ENCODE measurements at regions of chr5 and their contacts with region 1.

Region 1: GRCh38 chr5:32174011-32174870 is at the start of gene GOLPH3:
- DNase-seq: peak; percentile 96
- H3K4me3 Mint-ChIP-seq: peak within 1 kb of the TSS; percentile 99
- H3K27ac Mint-ChIP-seq: peak within 1 kb of the TSS; percentile 95
- H3K4me1 Mint-ChIP-seq: peaks cover 32% of the 10 kb centered on the region
- H3K27me3 Mint-ChIP-seq: no peaks in the 10 kb centered on the region
- total RNA-seq, gene GOLPH3: 38.2 to 41.5 TPM

Region 2: GRCh38 chr5:31021181-31021624 is 1153.0 kb before region 1 on chr5:
- CTCF ChIA-PET with region 1: no interaction called
- intact Hi-C with region 1: no loop called
- DNase-seq: no peak
- H3K4me3 Mint-ChIP-seq: no peak overlapping the region
- H3K27ac Mint-ChIP-seq: no peak overlapping the region
- H3K4me1 Mint-ChIP-seq: no peaks in the 10 kb centered on the region
- H3K27me3 Mint-ChIP-seq: no peaks in the 10 kb centered on the region

Region 3: DNA sequence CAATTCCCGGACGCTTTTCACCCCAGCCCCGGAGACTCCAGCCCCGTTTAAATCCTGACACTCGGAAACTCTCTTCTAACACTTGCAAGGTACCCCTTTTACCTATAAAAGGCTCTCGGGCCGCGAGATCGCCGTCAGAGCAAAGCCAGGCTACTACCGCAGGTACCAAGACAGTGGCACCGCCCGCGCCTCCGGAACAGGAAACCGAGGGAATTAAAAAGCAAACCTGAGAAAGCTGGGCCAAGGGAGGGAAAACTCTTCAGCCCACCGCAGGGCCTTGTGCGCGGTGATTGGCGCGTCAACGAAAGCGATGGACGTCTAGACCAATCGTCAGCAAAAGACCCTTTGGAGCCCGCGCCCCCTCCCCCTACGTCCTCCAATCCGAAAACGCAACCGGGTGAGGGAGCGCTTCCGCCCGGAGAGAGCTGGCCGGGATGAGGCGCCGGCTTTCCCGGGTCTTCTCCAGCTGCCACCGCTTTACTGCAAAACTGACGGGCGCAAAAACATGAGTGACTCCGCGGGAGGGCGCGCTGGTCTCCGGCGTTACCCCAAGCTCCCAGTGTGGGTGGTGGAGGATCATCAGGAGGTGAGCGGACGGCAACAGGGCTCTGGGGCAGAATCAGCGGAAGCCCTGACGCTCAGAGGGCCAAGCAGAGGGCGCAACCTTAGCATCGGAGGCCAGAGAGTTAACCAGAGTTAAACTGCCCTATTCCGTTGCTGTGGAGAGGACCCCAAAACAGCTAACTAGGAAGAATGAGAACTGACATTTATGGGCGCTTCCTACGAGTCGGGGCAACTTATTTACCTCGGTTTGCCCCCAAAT is 642.1 kb before region 1 on chr5 and contains the starts of genes C5orf22 and DROSHA:
- CTCF ChIA-PET with region 1: no interaction called
- intact Hi-C with region 1: loop called (anchors 5 kb)
- DNase-seq: peak; percentile 95
- H3K4me3 Mint-ChIP-seq: peak within 1 kb of the TSS; percentile 87
- H3K27ac Mint-ChIP-seq: peak within 1 kb of the TSS; percentile 80
- H3K4me1 Mint-ChIP-seq: peaks cover 41% of the 10 kb centered on the region
- H3K27me3 Mint-ChIP-seq: no peaks in the 10 kb centered on the region
- total RNA-seq, gene C5orf22: 23.7 to 25.5 TPM
- total RNA-seq, gene DROSHA: 60.7 to 60.9 TPM

Region 4: DNA sequence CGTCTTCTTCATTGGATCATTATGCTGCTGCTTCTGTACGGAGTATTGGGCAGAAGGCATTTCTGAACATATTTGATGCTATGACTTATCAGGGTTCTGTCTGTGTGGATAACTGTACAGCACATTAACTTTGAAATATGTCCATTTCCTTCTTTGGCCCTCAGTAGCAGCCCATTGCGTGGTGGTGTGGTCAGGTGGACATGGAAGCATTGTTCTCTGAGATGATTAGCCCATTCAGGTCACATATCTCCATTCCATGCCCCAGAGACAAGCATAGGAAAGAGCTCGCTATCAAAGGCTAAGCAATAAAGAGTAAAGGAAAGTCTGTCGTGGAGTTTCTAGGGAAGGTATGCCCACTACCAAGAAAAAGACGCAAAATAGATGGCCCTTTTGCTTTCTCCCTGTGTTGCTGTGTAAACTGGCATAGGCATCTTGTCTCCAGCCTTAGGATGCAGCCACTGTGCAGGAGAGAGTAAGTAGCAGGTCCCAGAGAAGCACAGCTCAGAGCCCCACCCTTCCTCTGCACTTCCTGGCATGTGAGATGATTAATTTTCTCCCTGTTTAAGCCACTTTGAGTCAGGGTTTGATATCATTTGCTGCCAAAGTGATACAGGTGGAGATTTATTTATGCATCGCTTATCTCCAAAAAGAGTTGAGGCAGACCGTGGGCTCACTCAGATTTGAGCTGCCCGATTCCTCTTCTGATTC is 313.4 kb before region 1 on chr5:
- CTCF ChIA-PET with region 1: no interaction called
- intact Hi-C with region 1: loop called (anchors 2 kb)
- DNase-seq: peak; percentile 55
- H3K4me3 Mint-ChIP-seq: no peak overlapping the region
- H3K27ac Mint-ChIP-seq: peak overlapping the region; percentile 59
- H3K4me1 Mint-ChIP-seq: peaks cover 29% of the 10 kb centered on the region
- H3K27me3 Mint-ChIP-seq: peaks cover 3% of the 10 kb centered on the region

Region 5: DNA sequence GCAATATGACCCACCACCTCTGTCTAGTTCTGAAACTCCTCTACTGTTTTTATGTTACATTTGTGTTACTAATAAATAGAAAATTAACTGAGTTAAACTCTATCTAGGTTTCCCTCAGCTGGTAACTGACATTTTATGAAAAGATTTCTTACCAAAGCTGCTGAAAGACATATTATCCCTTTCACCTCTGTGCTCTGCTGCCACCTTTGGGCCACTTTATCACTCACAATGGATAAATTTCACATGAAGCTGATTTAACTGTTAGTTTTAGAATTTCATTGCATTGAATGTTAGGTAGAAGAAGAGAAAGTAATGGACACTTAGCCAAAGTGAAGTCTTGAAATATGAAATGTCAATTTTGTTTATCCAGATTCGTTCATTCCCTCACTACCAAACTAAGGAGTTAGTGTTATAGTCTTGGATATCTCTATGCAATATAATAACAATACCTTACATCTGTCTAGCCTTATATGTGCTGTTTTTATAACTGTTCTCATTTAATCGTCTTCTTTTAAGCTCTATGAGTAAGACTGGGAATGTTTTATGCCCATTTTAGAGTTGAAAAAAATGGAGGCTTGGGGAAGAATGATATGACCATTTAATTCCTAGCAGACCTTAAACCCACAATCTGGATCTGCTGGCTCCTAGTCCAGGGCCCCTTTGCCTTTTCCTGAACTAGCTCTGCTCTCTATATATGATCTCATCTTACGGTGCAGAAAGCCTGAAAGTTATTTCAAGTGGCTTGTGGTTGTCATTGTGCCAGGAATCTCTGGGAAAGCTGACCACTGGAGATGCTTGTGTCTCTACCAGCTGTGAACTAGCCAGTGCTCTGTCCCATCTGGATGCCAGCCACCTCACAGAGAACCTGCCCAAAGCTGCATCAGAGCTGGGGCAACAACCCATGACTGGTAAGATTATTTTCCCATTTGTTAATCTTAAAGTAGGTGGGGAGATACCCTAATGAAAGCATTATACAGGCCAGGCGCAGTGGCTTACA is 97.2 kb before region 1 on chr5:
- CTCF ChIA-PET with region 1: no interaction called
- intact Hi-C with region 1: no loop called
- DNase-seq: peak; percentile 71
- H3K4me3 Mint-ChIP-seq: no peak overlapping the region
- H3K27ac Mint-ChIP-seq: no peak overlapping the region
- H3K4me1 Mint-ChIP-seq: no peaks in the 10 kb centered on the region
- H3K27me3 Mint-ChIP-seq: no peaks in the 10 kb centered on the region

Region 6: GRCh38 chr5:32202394-32202793 is 28.2 kb after region 1 on chr5:
- CTCF ChIA-PET with region 1: interaction called, 4 read pairs
- intact Hi-C with region 1: loop called (anchors 2 kb)
- DNase-seq: no peak
- H3K4me3 Mint-ChIP-seq: no peak overlapping the region
- H3K27ac Mint-ChIP-seq: no peak overlapping the region
- H3K4me1 Mint-ChIP-seq: peaks cover 33% of the 10 kb centered on the region
- H3K27me3 Mint-ChIP-seq: peaks cover 3% of the 10 kb centered on the region

Region 7: DNA sequence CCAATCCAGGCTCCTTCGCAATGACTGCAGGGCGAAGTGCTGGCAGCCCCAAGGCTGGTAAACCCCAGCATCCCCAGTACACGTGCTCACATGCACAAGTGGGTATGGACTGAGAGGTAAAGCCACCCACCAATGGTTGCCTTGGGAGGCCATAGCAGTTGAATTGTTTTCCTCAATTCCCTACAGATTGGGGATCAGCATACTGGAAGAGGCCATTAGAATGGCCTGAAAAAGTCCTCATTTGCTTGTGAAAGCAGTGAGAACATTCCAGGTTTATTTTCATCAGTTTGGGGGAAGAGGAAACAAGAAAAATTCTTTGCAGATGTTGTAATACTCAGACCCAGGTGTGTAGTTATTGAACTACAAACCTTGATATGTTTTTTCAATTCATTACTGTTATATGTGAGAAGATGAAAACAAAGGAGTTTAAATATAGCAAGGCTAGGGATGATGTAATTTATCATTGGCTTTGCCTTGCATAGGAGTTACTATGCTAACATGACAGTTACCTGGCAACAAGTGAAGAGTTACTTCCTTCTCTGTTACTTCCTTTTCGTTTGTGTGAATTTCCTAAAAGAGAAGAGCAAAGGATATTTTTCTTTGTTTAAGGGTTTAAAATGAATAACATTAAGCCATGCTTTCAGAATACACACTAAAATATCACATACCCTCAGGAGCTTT is 102.1 kb after region 1 on chr5:
- CTCF ChIA-PET with region 1: no interaction called
- intact Hi-C with region 1: loop called (anchors 1 kb)
- DNase-seq: no peak
- H3K4me3 Mint-ChIP-seq: no peak overlapping the region
- H3K27ac Mint-ChIP-seq: peak overlapping the region; percentile 77
- H3K4me1 Mint-ChIP-seq: peaks cover 52% of the 10 kb centered on the region
- H3K27me3 Mint-ChIP-seq: no peaks in the 10 kb centered on the region

Region 8: GRCh38 chr5:32443541-32444430 is 269.5 kb after region 1 on chr5:
- CTCF ChIA-PET with region 1: no interaction called
- intact Hi-C with region 1: loop called (anchors 1 kb)
- DNase-seq: peak; percentile 50
- H3K4me3 Mint-ChIP-seq: peak overlapping the region; percentile 93
- H3K27ac Mint-ChIP-seq: peak overlapping the region; percentile 96
- H3K4me1 Mint-ChIP-seq: peaks cover 35% of the 10 kb centered on the region
- H3K27me3 Mint-ChIP-seq: no peaks in the 10 kb centered on the region

Measured in activated naive CD4-positive, alpha-beta T cell treated with anti-CD3 and anti-CD28 coated beads for 36 hours (primary cell).